GM13976 (cell line): ENCODE measurements at regions of chr3 and their contacts with region 1.

Region 1: GRCh38 chr3:15268033-15268631 is 62.1 kb downstream of the CAPN7 start:
- DNase-seq: peak; percentile 85
- CTCF ChIP-seq: peak; percentile 97

Region 2: DNA sequence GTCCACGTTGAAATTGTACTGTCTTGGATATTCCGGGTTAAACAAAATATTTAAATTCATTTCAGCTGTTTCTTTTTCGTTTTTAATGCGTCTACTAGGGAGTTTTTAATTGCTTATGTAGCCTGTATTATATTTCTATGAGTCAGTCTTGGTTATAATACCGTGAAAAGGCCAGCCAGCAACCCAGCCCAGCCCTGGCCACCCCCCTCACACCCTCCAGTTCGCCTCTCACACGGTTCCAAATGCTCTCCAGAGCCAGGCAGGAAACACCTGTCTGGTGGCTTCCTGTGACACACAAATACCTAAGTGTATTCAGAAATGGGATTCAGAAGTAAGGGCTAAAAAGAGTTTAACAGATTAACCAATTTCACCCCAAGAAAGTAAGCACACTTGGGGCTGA is 59.8 kb after region 1 on chr3:
- in situ Hi-C with region 1: loop called (anchors 10 kb)
- DNase-seq: no peak
- CTCF ChIP-seq: no peak

Region 3: GRCh38 chr3:15384510-15385237 is 116.5 kb after region 1 on chr3:
- in situ Hi-C with region 1: loop called (anchors 5 kb)
- DNase-seq: peak; percentile 57
- CTCF ChIP-seq: no peak

Region 4: DNA sequence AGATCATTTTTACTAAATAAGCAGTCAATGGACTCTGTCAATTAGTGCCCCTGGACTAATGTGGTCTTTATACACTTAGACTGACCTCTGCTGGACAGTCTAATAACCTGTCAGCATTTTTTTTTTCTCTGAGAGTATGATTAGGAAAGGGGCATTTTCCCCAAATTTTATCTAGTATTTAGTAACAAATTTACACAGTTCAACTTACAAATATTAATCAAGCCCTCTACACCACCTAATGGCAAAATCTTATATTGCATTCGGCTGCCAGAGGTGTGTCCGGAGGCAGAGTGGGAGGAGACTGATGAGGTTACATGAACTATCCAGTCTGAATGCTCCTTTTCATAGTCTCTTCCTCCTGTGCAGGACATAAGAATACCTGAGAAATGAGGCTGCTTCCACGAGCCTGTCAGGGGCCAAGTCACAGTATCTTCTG is 289.4 kb after region 1 on chr3:
- in situ Hi-C with region 1: loop called (anchors 10 kb)
- DNase-seq: peak; percentile 32
- CTCF ChIP-seq: peak; percentile 24